Aorta (tissue), 5 donors: ENCODE measurements at regions of chr1 and their contacts with region 1.

Region 1: DNA sequence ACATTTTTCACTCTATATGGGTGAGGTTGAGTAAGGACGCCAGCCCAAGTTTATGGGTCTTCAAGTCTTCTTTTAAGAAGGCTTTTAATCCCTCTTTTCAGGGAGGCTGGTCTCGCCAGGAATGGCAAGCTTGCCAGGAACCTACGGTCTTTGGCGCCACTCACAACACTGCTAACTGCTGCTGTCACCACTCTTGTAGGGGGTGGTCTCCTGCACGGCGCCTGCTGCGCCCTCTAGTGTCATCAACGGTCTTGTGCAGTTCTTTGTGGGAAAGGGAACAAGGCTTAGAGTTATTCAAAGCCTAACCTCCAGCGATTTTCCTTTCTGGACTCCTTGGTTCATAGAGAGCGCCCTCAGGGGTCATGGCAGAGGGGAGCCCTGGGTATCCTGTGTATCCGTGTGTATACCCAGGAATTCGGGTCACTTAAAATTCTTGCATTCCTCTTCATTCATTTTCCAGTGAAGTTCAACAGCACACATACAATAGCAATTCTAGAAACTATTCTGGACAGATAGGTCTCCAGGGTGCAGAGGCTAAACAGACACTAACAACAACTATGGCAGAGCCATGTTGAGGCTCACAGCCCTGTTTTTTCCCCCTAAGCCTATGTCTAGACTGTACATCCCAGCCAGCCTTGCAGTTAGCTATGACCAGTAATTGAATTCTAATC is 392.8 kb upstream of the CAMK1G start:
- DNase-seq: peak; percentile 62 to 83
- ATAC-seq: peak; percentile 69
- H3K4me3 ChIP-seq: no peak overlapping the region
- H3K27ac ChIP-seq: no peak overlapping the region
- H3K4me1 ChIP-seq: no peaks in the 10 kb centered on the region
- H3K27me3 ChIP-seq: no peaks in the 10 kb centered on the region

Region 2: DNA sequence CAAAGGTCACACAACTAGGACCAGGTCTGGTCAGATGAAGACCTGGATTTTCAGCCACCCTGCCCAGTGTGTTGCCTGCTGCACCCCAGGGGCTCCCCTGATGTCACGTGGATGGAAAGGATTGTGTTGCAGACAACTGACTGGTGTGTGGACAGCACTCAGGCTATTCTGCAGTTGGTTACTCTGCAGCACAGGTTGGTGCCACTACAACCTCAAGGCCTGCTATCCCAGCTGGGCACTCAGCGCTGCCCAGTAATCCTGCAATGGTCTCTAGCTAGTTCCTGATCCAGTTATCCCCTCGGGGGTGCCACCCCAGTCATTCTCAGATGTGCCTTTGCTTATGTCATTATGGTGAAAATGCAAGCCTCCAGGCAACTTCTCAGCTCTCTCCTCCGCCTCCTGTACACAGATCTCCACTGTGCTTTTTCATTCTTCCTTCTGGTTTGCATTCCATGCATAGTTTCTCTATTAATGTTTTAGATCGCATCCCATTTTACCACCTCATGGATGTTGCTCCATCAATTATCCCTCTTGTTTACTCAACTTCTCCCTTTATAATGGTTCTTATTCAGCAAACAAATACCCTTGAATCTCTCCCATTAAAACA is 110.5 kb before region 1 on chr1:
- intact Hi-C with region 1: loop called in 1 of 2 experiments (anchors 5 kb)
- DNase-seq: no peak
- ATAC-seq: no peak
- H3K4me3 ChIP-seq: no peak overlapping the region
- H3K27ac ChIP-seq: no peak overlapping the region
- H3K4me1 ChIP-seq: no peaks in the 10 kb centered on the region
- H3K27me3 ChIP-seq: no peaks in the 10 kb centered on the region

Region 3: GRCh38 chr1:209318181-209319056 is 127.7 kb after region 1 on chr1:
- intact Hi-C with region 1: no loop called
- DNase-seq: no peak
- ATAC-seq: no peak
- H3K4me3 ChIP-seq: no peak overlapping the region
- H3K27ac ChIP-seq: no peak overlapping the region
- H3K4me1 ChIP-seq: no peaks in the 10 kb centered on the region
- H3K27me3 ChIP-seq: no peaks in the 10 kb centered on the region